Mammary epithelial cell (primary cell): ENCODE measurements at regions of chr1 and their contacts with region 1.

Region 1: GRCh38 chr1:3712573-3713535 is 39.4 kb upstream of the CCDC27 start:
- DNase-seq: no peak
- H3K4me3 ChIP-seq: no peak overlapping the region
- H3K27ac ChIP-seq: no peak overlapping the region
- H3K4me1 ChIP-seq: peaks cover 59% of the 10 kb centered on the region
- H3K27me3 ChIP-seq: no peaks in the 10 kb centered on the region
- CTCF ChIP-seq: no peak

Region 2: DNA sequence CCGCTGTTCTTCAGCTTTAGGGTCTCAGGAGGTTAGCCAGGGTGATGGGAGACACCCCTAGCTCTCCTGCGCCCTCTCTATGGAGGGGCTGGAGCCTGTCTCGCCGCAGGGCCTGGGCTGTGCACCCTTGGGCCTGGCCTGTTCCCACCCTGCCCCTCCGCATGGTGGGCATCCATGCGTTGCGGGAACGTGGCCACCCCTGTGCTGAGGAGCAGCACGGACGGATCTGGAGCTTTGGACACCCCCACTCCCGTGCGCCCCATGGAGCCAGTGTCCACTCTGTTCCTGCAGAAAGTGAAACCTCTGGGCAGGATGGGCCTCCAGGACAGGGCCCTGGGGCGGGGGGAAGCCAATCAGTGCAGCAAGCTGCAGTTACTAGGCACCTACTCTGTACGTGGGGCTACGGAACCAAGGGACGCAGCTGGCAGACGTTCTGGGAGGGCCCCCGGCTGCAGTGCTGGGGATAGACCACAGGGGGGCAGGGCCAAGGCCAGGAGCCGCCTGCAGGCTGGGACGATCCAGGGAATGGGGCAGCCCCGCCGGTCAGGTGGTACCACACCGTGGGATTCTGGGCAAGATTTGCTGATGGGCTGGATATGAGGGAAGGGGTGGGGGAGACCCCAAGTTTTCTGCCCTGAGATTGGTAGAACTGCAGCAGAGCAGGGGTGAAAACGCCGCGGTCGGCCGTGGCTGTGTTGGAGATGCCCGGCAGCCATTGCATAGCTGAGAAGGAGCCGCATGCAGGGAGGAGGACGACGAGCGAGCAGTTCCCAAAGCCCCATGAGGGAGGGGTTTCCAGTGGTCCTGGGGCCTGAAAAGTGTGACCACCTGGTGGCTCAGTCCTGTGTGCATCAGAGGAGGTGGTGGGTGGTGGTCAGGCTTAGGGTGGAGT is 17.3 kb before region 1 on chr1:
- CTCF ChIA-PET with region 1: no interaction called
- dilution Hi-C with region 1: no loop called
- in situ Hi-C with region 1: no loop called
- intact Hi-C with region 1: loop called (anchors 1 kb)
- DNase-seq: no peak
- H3K4me3 ChIP-seq: no peak overlapping the region
- H3K27ac ChIP-seq: no peak overlapping the region
- H3K4me1 ChIP-seq: peaks cover 35% of the 10 kb centered on the region
- H3K27me3 ChIP-seq: no peaks in the 10 kb centered on the region
- CTCF ChIP-seq: peak; percentile 76 to 84

Region 3: DNA sequence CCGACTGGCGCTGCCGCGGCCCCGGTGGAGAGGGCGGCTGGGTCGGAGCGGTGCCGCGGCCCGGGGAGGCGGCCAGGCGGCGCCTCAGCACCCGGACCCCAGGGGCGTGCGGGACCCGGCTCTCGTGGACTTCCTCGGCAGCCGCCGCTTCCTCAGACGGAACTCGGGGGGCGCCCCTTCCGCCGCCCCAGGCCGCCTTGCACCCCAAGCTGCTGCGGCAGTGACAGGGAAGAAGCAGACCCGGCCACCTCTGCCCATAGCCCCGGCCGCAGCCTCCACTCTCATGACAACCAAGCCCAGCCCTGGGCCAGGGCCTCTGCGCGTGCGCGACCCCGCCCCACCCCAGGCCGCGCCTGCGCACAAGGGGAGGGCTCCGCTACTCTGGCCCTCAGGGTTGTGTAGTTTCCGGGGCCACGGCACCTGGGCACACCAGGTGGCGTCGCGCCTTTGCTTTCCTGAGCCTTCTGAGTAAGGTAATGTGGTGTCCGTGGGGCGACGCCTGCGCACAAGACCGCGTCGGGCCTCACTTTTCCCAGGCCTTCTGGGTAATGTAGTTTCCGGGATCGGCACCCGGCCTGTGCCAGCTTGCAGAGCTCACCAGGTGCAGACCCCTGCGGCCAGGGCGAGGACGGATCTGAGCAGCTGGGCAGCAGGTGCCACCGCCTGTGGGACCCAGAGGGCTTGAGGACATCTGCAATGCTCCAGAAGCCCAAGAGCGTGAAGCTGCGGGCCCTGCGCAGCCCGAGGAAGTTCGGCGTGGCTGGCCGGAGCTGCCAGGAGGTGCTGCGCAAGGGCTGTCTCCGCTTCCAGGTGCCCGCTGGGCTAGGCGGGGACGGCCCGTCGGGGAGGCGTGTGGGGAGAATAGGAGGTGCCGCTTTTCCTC is 144.3 kb after region 1 on chr1 and contains the starts of genes CEP104 and DFFB:
- CTCF ChIA-PET with region 1: no interaction called
- dilution Hi-C with region 1: no loop called
- in situ Hi-C with region 1: no loop called
- intact Hi-C with region 1: no loop called
- DNase-seq: peak; percentile 99
- H3K4me3 ChIP-seq: peak within 1 kb of the TSS; percentile 74 to 95 (median 87)
- H3K27ac ChIP-seq: peak within 1 kb of the TSS; percentile 41
- H3K4me1 ChIP-seq: peaks cover 21% of the 10 kb centered on the region
- H3K27me3 ChIP-seq: no peaks in the 10 kb centered on the region
- CTCF ChIP-seq: peak; percentile 12 to 65
- total RNA-seq, gene CEP104: 39.2 to 76.6 TPM
- total RNA-seq, gene DFFB: 3.3 to 4.8 TPM